ENCODE measurements at regions of chr14 and their contacts with region 1.

Region 1: GRCh38 chr14:22918804-22919600 is at the start of gene RBM23:
- DNase-seq: peak; percentile 94 to 100 (median 98)

Region 2: GRCh38 chr14:22900081-22900799 is 18.8 kb before region 1 on chr14:
- intact Hi-C with region 1: no loop called
- DNase-seq: peak in 13 of 42 donors; percentile 43 to 71 (median 55)

Region 3: GRCh38 chr14:22929104-22929847 is 10.3 kb after region 1 on chr14 and contains the start of gene PRMT5:
- intact Hi-C with region 1: loop called (anchors 1 kb)
- DNase-seq: peak; percentile 92 to 100 (median 99)